ENCODE measurements at regions of chr15 and their contacts with region 1.

Region 1: DNA sequence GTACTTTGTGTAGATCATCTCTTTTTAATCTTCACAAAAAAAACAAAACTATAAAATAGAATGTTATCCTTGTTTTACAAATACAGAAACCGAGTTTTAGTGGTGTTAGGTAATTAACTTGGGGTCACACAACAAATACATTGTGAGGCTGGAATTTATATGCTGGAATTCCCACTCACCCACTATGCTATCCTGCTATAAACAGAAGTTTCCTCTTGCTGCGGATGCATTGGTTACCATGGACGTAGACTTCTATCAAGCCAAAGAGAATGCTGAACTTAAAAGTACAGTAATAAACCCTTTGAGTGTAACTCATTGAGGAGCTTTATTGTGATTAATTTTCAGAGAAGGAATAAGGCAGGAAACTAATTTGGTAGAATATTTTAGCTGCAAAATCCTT is 9.2 kb downstream of the SNAP23 start:
- DNase-seq: no peak
- ATAC-seq: no peak
- H3K4me3 ChIP-seq: no peak overlapping the region
- H3K27ac ChIP-seq: no peak overlapping the region
- H3K4me1 ChIP-seq: peaks cover 5% of the 10 kb centered on the region; the same call in 1 of the 2 replicates
- H3K27me3 ChIP-seq: no peaks in the 10 kb centered on the region
- CTCF ChIP-seq: no peak

Region 2: GRCh38 chr15:42465520-42466259 is 38.9 kb before region 1 on chr15:
- CTCF ChIA-PET with region 1: no interaction called
- POLR2A ChIA-PET with region 1: interaction called, 11 read pairs
- in situ Hi-C with region 1: no loop called
- intact Hi-C with region 1: no loop called
- DNase-seq: no peak
- ATAC-seq: no peak
- H3K4me3 ChIP-seq: no peak overlapping the region
- H3K27ac ChIP-seq: no peak overlapping the region
- H3K4me1 ChIP-seq: no peaks in the 10 kb centered on the region
- H3K27me3 ChIP-seq: no peaks in the 10 kb centered on the region
- CTCF ChIP-seq: no peak

Region 3: GRCh38 chr15:42800731-42801474 is 296.3 kb after region 1 on chr15:
- CTCF ChIA-PET with region 1: no interaction called
- POLR2A ChIA-PET with region 1: no interaction called
- in situ Hi-C with region 1: no loop called
- intact Hi-C with region 1: no loop called
- DNase-seq: no peak
- ATAC-seq: no peak
- H3K4me3 ChIP-seq: no peak overlapping the region
- H3K27ac ChIP-seq: no peak overlapping the region
- H3K4me1 ChIP-seq: no peaks in the 10 kb centered on the region
- H3K27me3 ChIP-seq: no peaks in the 10 kb centered on the region
- CTCF ChIP-seq: peak; percentile 64

Measured in Panc1 (cell line).